MCF 10A (cell line): ENCODE measurements at regions of chr5 and their contacts with region 1.

Region 1: GRCh38 chr5:84635235-84636055 is 250.8 kb upstream of the EDIL3 start:
- DNase-seq: no peak
- H3K4me3 Mint-ChIP-seq: no peak overlapping the region
- H3K27ac Mint-ChIP-seq: no peak overlapping the region
- H3K4me1 Mint-ChIP-seq: no peaks in the 10 kb centered on the region
- H3K27me3 Mint-ChIP-seq: peaks cover 10% of the 10 kb centered on the region
- CTCF ChIP-seq: no peak

Region 2: DNA sequence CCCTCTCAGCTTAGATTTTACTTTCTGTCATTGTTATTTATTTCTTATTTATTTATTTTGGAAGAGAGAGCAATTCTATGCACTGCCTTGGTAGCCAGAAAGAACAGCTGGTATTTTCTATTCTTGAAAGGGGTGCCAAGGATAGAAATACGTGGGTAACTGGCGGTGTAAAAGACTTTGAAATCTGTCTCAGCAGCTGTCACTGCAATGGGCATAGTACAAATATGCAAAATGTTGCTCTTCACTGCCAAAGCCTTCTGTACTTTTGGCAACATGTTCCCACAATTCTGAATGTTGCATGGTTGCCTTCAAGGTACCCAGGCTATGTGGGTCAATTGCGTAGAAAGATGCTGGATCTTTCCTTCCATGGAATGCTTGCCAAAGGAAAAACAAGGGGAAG is 20.5 kb before region 1 on chr5:
- CTCF ChIA-PET with region 1: no interaction called
- POLR2A ChIA-PET with region 1: no interaction called
- intact Hi-C with region 1: loop called (anchors 2 kb)
- DNase-seq: no peak
- H3K4me3 Mint-ChIP-seq: no peak overlapping the region
- H3K27ac Mint-ChIP-seq: no peak overlapping the region
- H3K4me1 Mint-ChIP-seq: no peaks in the 10 kb centered on the region
- H3K27me3 Mint-ChIP-seq: peaks cover 12% of the 10 kb centered on the region
- CTCF ChIP-seq: no peak